ENCODE measurements at regions of chr16 and their contacts with region 1.

Region 1: DNA sequence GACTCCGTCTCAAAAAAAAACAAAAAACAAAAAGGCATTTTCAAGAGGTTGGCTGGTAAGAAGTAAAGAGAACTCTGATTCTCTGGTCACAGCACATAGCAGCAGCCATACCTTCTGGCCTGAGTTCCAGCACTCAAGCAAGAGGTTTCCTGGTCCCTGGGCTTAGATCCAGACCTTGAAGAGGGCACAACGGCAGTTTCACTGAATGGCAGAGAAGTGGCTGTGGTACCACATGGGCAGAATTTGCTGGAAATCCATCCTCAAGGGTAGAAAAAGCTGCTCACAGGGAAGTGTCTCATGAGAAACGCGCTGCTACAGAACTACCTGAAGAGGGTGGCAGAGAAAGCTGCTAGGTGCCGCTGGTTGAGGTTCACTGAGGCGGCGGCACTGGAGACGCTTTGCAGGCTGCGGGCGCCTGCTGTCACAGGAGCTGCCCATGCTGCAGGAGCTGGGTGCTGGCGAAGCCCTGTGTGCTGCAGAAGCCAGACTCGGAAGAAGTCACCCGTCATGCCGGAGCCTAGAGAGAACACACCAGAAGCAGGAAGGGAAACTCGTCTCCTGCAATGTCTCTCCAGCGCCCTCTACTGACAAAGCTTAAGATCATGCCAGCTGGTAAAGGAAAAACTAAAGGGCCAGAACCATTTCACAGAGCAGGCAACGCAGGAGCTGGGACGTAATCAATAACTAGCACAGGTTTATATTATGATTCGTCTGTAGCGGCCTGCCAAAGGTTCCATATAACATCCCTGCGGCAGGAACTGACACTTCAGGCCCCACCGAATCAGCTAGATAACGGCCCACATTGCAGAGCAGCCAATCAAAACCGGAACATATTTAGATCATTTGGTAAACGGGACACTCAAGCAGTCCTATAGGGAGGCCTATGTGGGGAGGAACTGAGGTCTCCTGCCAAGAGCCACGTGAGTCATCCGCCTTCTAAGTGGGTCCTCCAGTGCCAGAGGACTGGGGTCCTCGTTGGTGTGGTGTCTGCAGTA is 5.4 kb upstream of the ZNF213 start:
- DNase-seq: peak; percentile 64 to 89 (median 85)
- H3K4me3 ChIP-seq: peak overlapping the region; percentile 89
- H3K4me3 Mint-ChIP-seq: peak overlapping the region; percentile 87 to 96 (median 95)
- H3K27ac ChIP-seq: peak overlapping the region; percentile 62
- H3K27ac Mint-ChIP-seq: peak overlapping the region; percentile 71 to 96 (median 88)
- H3K4me1 ChIP-seq: peaks cover 34% of the 10 kb centered on the region
- H3K4me1 Mint-ChIP-seq: peaks cover 43 to 66% (median 52%) of the 10 kb centered on the region in 3 donors
- H3K27me3 ChIP-seq: no peaks in the 10 kb centered on the region
- H3K27me3 Mint-ChIP-seq: no peaks in the 10 kb centered on the region

Region 2: DNA sequence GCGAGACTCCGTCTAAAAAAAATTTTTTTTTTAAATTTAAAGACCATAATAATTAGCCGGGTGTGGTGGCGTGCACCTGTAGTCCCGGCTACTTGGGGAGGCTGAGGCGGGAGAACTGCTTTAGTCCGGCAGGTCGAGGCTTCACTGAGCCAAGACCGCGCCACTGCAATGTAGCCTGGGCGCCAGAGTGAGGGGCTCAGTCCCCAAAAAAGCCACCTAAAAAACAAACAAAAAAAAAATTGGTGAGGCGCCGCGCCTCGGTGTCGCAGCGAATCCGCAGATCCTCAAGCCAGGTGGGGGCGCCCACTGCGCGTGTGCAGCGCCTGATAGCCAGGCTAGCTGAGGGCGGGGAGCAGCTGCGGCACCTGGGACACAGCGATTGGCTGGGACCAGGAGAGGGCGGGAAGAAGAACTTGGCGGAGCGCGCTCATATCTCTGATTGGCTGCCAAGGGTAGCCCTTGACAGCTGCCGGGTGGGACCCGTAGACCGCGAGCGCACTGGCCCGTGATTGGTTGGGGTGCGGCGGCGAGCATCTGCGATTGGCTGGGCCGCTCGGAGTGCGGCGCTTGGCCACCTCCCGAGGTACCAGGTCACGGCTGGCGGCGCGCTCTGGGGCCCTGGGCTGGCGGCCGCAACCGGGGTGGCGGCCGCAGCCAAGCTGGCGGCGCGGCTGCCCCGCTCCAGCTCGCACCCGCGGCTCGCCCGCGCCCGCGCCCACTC is 125.7 kb before region 1 on chr16:
- CTCF ChIA-PET with region 1: interaction called, 25 read pairs
- POLR2A ChIA-PET with region 1: no interaction called
- DNase-seq: peak; percentile 91 to 97 (median 96)
- H3K4me3 ChIP-seq: no peak overlapping the region
- H3K4me3 Mint-ChIP-seq: peak overlapping the region; percentile 66 to 88 (median 79)
- H3K27ac ChIP-seq: no peak overlapping the region
- H3K27ac Mint-ChIP-seq: peak overlapping the region in 4 of 8 donors; percentile 8 to 79 (median 50)
- H3K4me1 ChIP-seq: peaks cover 18% of the 10 kb centered on the region
- H3K4me1 Mint-ChIP-seq: peaks cover 22 to 31% (median 27%) of the 10 kb centered on the region in 3 donors
- H3K27me3 ChIP-seq: no peaks in the 10 kb centered on the region
- H3K27me3 Mint-ChIP-seq: peaks cover 8 to 13% of the 10 kb centered on the region in 2 donors

Region 3: GRCh38 chr16:3065069-3065741 is 64.2 kb before region 1 on chr16 and contains the start of gene IL32:
- CTCF ChIA-PET with region 1: interaction called, 190 read pairs
- POLR2A ChIA-PET with region 1: interaction called, 28 read pairs
- DNase-seq: peak; percentile 44 to 74 (median 65)
- H3K4me3 ChIP-seq: peak within 1 kb of the TSS; percentile 92
- H3K4me3 Mint-ChIP-seq: peak within 1 kb of the TSS; percentile 98 to 100 (median 100)
- H3K27ac ChIP-seq: peak within 1 kb of the TSS; percentile 81
- H3K27ac Mint-ChIP-seq: peak within 1 kb of the TSS; percentile 88 to 99 (median 96)
- H3K4me1 ChIP-seq: peaks cover 54% of the 10 kb centered on the region
- H3K4me1 Mint-ChIP-seq: peaks cover 49 to 74% (median 68%) of the 10 kb centered on the region in 3 donors
- H3K27me3 ChIP-seq: no peaks in the 10 kb centered on the region
- H3K27me3 Mint-ChIP-seq: no peaks in the 10 kb centered on the region
- total RNA-seq, gene IL32: 975 to 992 TPM

Region 4: GRCh38 chr16:3112881-3113574 is 16.4 kb before region 1 on chr16:
- CTCF ChIA-PET with region 1: interaction called, 278 read pairs
- POLR2A ChIA-PET with region 1: no interaction called
- DNase-seq: no peak
- H3K4me3 ChIP-seq: no peak overlapping the region
- H3K4me3 Mint-ChIP-seq: no peak overlapping the region
- H3K27ac ChIP-seq: peak overlapping the region; percentile 51
- H3K27ac Mint-ChIP-seq: peak overlapping the region in 1 of 8 donors; percentile 6
- H3K4me1 ChIP-seq: no peaks in the 10 kb centered on the region
- H3K4me1 Mint-ChIP-seq: peaks cover 0 to 3% (median 0%) of the 10 kb centered on the region in 3 donors
- H3K27me3 ChIP-seq: no peaks in the 10 kb centered on the region
- H3K27me3 Mint-ChIP-seq: peaks cover 2 to 5% of the 10 kb centered on the region in 2 donors

Region 5: GRCh38 chr16:3158471-3159314 is 29.3 kb after region 1 on chr16:
- CTCF ChIA-PET with region 1: interaction called, 44 read pairs
- POLR2A ChIA-PET with region 1: interaction called, 29 read pairs
- DNase-seq: peak; percentile 92 to 97 (median 93)
- H3K4me3 ChIP-seq: peak overlapping the region; percentile 87
- H3K4me3 Mint-ChIP-seq: peak overlapping the region; percentile 86 to 96 (median 91)
- H3K27ac ChIP-seq: peak overlapping the region; percentile 82
- H3K27ac Mint-ChIP-seq: peak overlapping the region; percentile 89 to 99 (median 96)
- H3K4me1 ChIP-seq: peaks cover 24% of the 10 kb centered on the region
- H3K4me1 Mint-ChIP-seq: peaks cover 21 to 32% (median 25%) of the 10 kb centered on the region in 3 donors
- H3K27me3 ChIP-seq: no peaks in the 10 kb centered on the region
- H3K27me3 Mint-ChIP-seq: peaks cover 0 to 16% of the 10 kb centered on the region in 2 donors

Region 6: GRCh38 chr16:3171855-3172593 is 42.6 kb after region 1 on chr16:
- CTCF ChIA-PET with region 1: interaction called, 48 read pairs
- POLR2A ChIA-PET with region 1: no interaction called
- DNase-seq: no peak
- H3K4me3 ChIP-seq: peak overlapping the region; percentile 53
- H3K4me3 Mint-ChIP-seq: peak overlapping the region; percentile 73 to 93 (median 81)
- H3K27ac ChIP-seq: no peak overlapping the region
- H3K27ac Mint-ChIP-seq: peak overlapping the region; percentile 69 to 90 (median 82)
- H3K4me1 ChIP-seq: peaks cover 35% of the 10 kb centered on the region
- H3K4me1 Mint-ChIP-seq: peaks cover 31 to 45% (median 43%) of the 10 kb centered on the region in 3 donors
- H3K27me3 ChIP-seq: peaks cover 42% of the 10 kb centered on the region
- H3K27me3 Mint-ChIP-seq: peaks cover 34 to 40% of the 10 kb centered on the region in 2 donors

Measured in CD8-positive, alpha-beta memory T cell (primary cell).